CD4-positive, alpha-beta memory T cell (primary cell): ENCODE measurements at regions of chr5 and their contacts with region 1.

Region 1: GRCh38 chr5:132386644-132387286 is 17.3 kb downstream of the SLC22A5 start:
- DNase-seq: peak; percentile 75 to 80 (median 78)
- H3K4me3 ChIP-seq: no peak overlapping the region
- H3K4me3 Mint-ChIP-seq: peak overlapping the region in 1 of 8 donors; percentile 36
- H3K27ac ChIP-seq: no peak overlapping the region
- H3K27ac Mint-ChIP-seq: peak overlapping the region; percentile 22 to 88 (median 31)
- H3K4me1 ChIP-seq: peaks cover 20% of the 10 kb centered on the region
- H3K4me1 Mint-ChIP-seq: peaks cover 20 to 53% (median 33%) of the 10 kb centered on the region in 4 donors
- H3K27me3 ChIP-seq: no peaks in the 10 kb centered on the region
- H3K27me3 Mint-ChIP-seq: no peaks in the 10 kb centered on the region

Region 2: DNA sequence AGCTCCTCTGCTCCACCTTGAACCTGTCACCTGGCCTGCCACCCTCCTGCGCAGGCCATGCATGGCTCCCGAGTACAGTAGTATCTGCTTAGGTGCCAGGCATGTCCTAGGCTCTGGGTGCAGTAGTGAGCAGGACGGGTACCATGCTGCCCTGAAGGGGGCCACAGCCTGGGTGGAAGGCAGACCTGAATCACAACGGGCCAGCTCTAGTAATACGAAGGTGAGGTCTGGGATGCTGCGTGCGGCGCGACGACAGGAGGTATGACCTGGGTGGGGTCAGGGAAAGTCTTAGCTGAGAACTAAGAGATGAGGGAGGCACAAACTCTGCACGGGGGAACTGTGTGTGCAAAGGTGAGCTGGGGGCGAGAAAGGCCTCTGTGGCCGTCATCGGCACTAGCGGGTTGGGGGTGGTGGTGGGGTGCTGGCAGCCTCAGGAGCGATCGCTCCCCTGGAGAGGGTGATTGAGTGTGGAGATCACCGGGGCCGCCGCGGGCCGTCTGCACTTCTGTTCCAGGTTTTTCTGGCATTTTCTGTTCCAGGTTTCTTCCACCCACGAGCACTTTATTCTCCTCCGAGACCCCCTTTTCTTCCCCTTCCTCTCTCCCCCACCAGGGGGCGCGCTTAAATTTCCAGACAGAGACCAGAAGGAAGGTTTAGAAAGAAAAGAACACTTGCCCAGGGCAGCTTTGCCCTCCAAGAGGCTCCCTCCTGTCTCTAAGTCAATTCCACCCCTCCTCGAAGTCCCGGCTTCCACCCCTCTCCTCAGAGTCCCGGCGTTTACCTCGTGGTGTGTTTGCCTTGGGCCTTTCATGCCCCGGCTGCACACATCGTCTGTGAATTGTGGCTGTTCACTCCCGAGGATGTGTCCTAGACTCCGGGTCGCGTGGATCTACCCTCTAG is 114.2 kb before region 1 on chr5:
- CTCF ChIA-PET with region 1: interaction called, 4 read pairs
- POLR2A ChIA-PET with region 1: no interaction called
- intact Hi-C with region 1: loop called (anchors 5 kb)
- DNase-seq: peak; percentile 32 to 54 (median 47)
- H3K4me3 ChIP-seq: no peak overlapping the region
- H3K4me3 Mint-ChIP-seq: peak overlapping the region in 4 of 8 donors; percentile 6 to 61 (median 41)
- H3K27ac ChIP-seq: no peak overlapping the region
- H3K27ac Mint-ChIP-seq: peak overlapping the region in 1 of 7 donors; percentile 12
- H3K4me1 ChIP-seq: no peaks in the 10 kb centered on the region
- H3K4me1 Mint-ChIP-seq: peaks cover 0 to 22% (median 12%) of the 10 kb centered on the region in 4 donors
- H3K27me3 ChIP-seq: no peaks in the 10 kb centered on the region
- H3K27me3 Mint-ChIP-seq: peaks cover 6 to 16% of the 10 kb centered on the region in 2 donors

Region 3: DNA sequence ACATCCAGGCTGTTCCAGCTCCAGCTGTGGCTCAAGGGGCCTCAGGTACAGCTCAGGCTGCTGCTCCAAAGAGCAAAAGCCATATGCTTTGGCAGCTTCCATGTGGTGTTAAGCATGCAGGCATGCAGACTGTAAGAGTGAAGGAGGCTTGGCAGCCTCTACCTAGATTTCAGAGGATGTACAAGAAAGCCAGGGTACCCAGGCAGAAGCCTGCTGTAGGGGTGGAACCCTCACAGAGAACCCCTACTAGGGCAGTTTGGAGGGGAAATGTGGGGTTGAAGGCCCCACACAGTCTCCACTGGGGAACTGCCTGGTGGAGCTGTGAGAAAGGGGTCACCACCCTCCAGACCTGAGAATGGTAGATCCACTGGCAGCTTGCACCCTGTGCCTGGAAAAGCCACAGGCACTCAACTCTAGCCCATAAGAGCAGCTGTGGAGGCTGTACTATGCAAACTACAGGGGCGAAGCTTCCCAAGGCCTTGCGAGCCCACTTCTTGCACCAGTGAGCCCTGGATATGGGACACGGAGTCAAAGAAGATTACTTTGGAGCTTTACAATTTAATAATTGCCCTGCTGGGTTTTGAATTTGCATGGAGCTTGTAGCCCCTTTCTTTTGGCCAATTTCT is 31.5 kb before region 1 on chr5:
- CTCF ChIA-PET with region 1: no interaction called
- POLR2A ChIA-PET with region 1: no interaction called
- intact Hi-C with region 1: no loop called
- DNase-seq: no peak
- H3K4me3 ChIP-seq: no peak overlapping the region
- H3K4me3 Mint-ChIP-seq: no peak overlapping the region
- H3K27ac ChIP-seq: no peak overlapping the region
- H3K27ac Mint-ChIP-seq: no peak overlapping the region
- H3K4me1 ChIP-seq: no peaks in the 10 kb centered on the region
- H3K4me1 Mint-ChIP-seq: no peaks in the 10 kb centered on the region
- H3K27me3 ChIP-seq: no peaks in the 10 kb centered on the region
- H3K27me3 Mint-ChIP-seq: peaks cover 0 to 2% of the 10 kb centered on the region in 2 donors

Region 4: GRCh38 chr5:132419502-132420468 is 33.0 kb after region 1 on chr5:
- CTCF ChIA-PET with region 1: interaction called, 25 read pairs
- POLR2A ChIA-PET with region 1: interaction called, 10 read pairs
- intact Hi-C with region 1: loop called (anchors 2 kb)
- DNase-seq: peak; percentile 57 to 69 (median 64)
- H3K4me3 ChIP-seq: peak overlapping the region; percentile 38 to 51
- H3K4me3 Mint-ChIP-seq: peak overlapping the region; percentile 75 to 93 (median 80)
- H3K27ac ChIP-seq: peak overlapping the region; percentile 71
- H3K27ac Mint-ChIP-seq: peak overlapping the region; percentile 96 to 99 (median 97)
- H3K4me1 ChIP-seq: peaks cover 100% of the 10 kb centered on the region
- H3K4me1 Mint-ChIP-seq: peaks cover 76 to 98% (median 86%) of the 10 kb centered on the region in 4 donors
- H3K27me3 ChIP-seq: no peaks in the 10 kb centered on the region
- H3K27me3 Mint-ChIP-seq: no peaks in the 10 kb centered on the region

Region 5: DNA sequence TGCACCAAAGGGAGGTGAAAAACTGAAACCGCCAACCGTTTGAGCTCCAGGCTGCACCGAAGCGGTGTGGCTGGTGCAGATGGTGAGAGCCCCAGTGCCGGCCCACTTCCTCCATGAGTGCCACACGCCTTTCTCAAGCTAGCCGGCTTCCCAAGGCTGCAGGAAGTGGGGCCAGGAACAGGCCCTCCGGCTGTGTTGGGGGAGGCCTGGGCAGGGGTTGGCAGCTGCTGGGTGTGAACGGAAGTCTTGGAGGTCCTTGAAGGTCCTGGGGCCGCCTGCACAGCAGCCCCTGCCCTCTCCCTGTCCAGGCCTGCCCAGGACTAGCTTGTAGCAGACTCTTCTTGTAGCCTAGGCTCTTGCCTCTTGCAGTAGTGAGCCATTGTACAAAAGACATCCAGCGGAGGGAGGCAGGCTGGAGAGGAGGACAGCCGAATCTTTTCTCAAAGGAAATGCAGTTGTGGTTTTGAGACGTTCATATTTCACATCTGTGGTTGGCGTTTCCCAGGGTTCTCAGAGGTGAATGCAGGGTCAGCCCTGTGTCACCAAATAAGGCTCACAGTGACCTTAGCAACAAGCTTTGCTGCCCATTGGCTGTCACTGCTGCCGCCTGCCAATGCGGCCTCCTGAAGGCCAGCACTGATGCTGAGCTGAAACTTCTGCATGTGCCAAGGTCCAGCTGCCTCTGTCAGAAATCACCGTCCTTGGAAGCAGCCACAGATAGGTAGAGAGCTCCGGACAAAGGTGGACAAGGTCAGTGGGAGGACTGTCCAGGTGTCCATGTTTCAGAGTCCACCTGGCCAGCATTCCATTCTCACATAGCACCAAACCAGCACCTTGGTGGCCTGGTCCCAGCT is 79.9 kb after region 1 on chr5:
- CTCF ChIA-PET with region 1: interaction called, 12 read pairs
- POLR2A ChIA-PET with region 1: interaction called, 8 read pairs
- intact Hi-C with region 1: no loop called
- DNase-seq: peak; percentile 84 to 91 (median 85)
- H3K4me3 ChIP-seq: peak overlapping the region; percentile 2 to 50
- H3K4me3 Mint-ChIP-seq: peak overlapping the region; percentile 66 to 87 (median 83)
- H3K27ac ChIP-seq: peak overlapping the region; percentile 63
- H3K27ac Mint-ChIP-seq: peak overlapping the region; percentile 94 to 98 (median 96)
- H3K4me1 ChIP-seq: peaks cover 99% of the 10 kb centered on the region
- H3K4me1 Mint-ChIP-seq: peaks cover 76 to 100% (median 90%) of the 10 kb centered on the region in 4 donors
- H3K27me3 ChIP-seq: no peaks in the 10 kb centered on the region
- H3K27me3 Mint-ChIP-seq: no peaks in the 10 kb centered on the region

Region 6: GRCh38 chr5:132490486-132491367 is 104.0 kb after region 1 on chr5 and contains the start of gene IRF1:
- CTCF ChIA-PET with region 1: interaction called, 543 read pairs
- POLR2A ChIA-PET with region 1: interaction called, 151 read pairs
- intact Hi-C with region 1: no loop called
- DNase-seq: peak; percentile 97 to 99 (median 99)
- H3K4me3 ChIP-seq: peak within 1 kb of the TSS; percentile 94 to 96
- H3K4me3 Mint-ChIP-seq: peak within 1 kb of the TSS; percentile 94 to 97 (median 96)
- H3K27ac ChIP-seq: peak within 1 kb of the TSS; percentile 99
- H3K27ac Mint-ChIP-seq: peak within 1 kb of the TSS; percentile 93 to 99 (median 99)
- H3K4me1 ChIP-seq: peaks cover 79% of the 10 kb centered on the region
- H3K4me1 Mint-ChIP-seq: peaks cover 46 to 83% (median 61%) of the 10 kb centered on the region in 4 donors
- H3K27me3 ChIP-seq: no peaks in the 10 kb centered on the region
- H3K27me3 Mint-ChIP-seq: no peaks in the 10 kb centered on the region
- total RNA-seq, gene IRF1: 192 to 202 TPM

Region 7: DNA sequence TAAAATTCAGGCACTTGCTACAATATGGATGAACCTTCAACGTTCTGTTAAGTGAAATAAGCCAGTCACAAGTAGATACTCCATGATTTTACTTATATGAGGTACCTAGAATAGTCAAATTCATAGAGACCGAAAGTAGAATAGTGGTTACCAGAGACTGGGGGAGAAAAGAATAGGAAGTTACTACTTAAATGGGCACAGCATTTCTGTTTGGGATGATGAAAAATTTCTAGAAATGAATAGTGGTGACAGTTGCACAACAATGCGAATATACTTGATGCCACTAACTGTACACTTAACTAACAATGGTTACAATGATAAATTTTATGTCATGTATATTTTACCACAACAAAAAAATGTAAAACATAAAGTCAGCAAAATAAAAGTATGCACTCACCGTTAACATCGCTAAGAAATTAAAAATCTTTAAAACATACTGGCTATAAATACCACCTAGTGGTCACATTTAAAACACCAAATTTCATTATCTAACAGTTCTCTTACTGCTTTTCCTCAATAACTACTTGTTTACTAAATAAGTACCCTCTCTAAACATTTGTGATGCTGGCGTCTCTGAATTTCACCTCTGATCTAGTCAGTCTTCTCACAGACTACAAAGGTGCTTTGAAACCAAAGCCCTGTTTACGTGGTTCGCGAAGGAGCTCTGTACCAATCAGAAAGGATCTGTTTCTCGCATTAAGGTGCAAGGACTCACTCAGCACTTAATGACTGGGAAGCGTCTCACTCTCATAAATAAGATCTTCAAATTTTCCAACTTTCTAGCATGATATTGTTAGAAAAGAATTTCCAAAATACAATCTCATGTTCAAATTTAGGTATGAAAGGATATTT is 327.9 kb after region 1 on chr5:
- CTCF ChIA-PET with region 1: interaction called, 5 read pairs
- POLR2A ChIA-PET with region 1: no interaction called
- intact Hi-C with region 1: loop called (anchors 1 kb)
- DNase-seq: peak in 4 of 5 donors; percentile 16 to 27 (median 22)
- H3K4me3 ChIP-seq: no peak overlapping the region
- H3K4me3 Mint-ChIP-seq: peak overlapping the region in 3 of 8 donors; percentile 43 to 63 (median 53)
- H3K27ac ChIP-seq: no peak overlapping the region
- H3K27ac Mint-ChIP-seq: no peak overlapping the region
- H3K4me1 ChIP-seq: no peaks in the 10 kb centered on the region
- H3K4me1 Mint-ChIP-seq: peaks cover 7 to 10% (median 8%) of the 10 kb centered on the region in 4 donors
- H3K27me3 ChIP-seq: no peaks in the 10 kb centered on the region
- H3K27me3 Mint-ChIP-seq: no peaks in the 10 kb centered on the region

Region 8: DNA sequence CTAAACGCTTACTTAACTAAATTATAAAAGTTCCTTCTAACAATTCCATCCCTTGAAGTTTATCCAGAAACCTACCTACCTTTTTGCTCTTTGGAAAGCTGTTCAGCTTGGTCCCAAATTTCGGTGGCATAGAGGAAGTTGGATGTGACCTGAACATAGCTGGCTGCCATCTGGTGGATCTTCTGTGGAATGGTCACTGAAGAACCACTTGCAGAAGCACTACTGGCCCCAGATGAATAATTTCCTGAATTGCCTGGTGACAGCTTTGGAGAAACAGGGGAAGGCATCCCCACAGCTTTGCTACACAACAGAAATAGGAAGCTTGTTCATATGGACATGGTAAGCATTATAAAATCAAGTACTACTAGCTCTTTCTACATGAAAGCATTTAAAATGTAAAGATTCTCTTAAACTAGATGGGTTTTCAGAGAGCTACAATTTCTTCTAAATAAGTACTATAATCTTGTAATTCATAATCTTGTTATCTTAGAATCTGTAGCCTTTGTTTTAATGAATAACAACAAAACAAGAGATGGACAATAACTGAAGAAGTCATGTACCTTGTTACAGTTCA is 496.6 kb after region 1 on chr5:
- CTCF ChIA-PET with region 1: interaction called, 3 read pairs
- POLR2A ChIA-PET with region 1: no interaction called
- intact Hi-C with region 1: loop called (anchors 1 kb)
- DNase-seq: peak in 4 of 5 donors; percentile 24 to 33 (median 28)
- H3K4me3 ChIP-seq: no peak overlapping the region
- H3K4me3 Mint-ChIP-seq: no peak overlapping the region
- H3K27ac ChIP-seq: no peak overlapping the region
- H3K27ac Mint-ChIP-seq: peak overlapping the region in 5 of 7 donors; percentile 36 to 84 (median 76)
- H3K4me1 ChIP-seq: no peaks in the 10 kb centered on the region
- H3K4me1 Mint-ChIP-seq: peaks cover 0 to 3% (median 0%) of the 10 kb centered on the region in 4 donors
- H3K27me3 ChIP-seq: no peaks in the 10 kb centered on the region
- H3K27me3 Mint-ChIP-seq: no peaks in the 10 kb centered on the region